Naive thymus-derived CD8-positive, alpha-beta T cell (primary cell): ENCODE measurements at regions of chr1 and their contacts with region 1.

Region 1: DNA sequence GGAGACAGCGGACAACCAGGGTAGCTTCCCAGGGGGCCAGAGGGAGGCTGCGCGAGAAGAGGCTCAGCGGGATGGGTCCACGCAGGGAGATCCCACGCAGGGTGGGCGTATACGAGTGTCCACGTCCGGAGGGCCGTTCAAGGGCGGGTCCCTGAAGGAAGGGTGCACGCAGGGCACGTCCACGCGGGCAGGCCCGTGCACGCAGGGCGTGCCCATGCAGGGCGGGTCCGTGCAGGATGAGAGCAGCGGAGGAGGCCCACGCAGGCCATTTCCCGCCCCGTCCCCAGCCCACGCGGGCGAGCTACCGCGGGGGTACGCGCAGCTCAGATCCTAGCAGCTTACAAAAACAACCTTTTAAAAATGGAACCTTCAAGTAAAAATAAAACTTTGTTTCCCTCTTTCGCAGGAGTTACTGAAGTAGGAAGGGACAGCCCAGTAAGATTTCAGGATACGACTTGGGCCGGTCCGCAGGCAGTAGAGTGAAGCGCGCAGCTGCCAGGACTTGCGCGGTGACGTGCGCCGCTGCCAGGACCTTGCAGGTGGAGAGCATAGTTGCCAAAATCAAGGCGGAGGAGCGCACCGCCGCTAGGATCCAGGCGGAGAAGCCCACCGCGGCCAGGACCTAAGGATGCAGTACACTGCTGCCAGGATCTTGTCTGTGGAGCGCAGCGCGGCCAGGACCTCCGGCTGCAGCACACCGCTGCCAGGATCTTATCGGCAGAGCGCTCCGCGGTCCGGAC is 416 bp upstream of the RNF187 start:
- DNase-seq: peak; percentile 68 to 96 (median 80)
- ATAC-seq: peak; percentile 76 to 81
- H3K4me3 Mint-ChIP-seq: peak overlapping the region; percentile 91 to 99 (median 96)
- H3K27ac Mint-ChIP-seq: peak overlapping the region; percentile 99 to 100 (median 100)
- H3K4me1 Mint-ChIP-seq: peaks cover 20 to 41% (median 33%) of the 10 kb centered on the region in 4 donors
- H3K27me3 Mint-ChIP-seq: no peaks in the 10 kb centered on the region

Region 2: GRCh38 chr1:228457396-228458176 is 29.2 kb before region 1 on chr1:
- POLR2A ChIA-PET with region 1: interaction called, 37 read pairs
- DNase-seq: peak; percentile 61 to 94 (median 86)
- ATAC-seq: peak; percentile 82 to 84
- H3K4me3 Mint-ChIP-seq: peak overlapping the region; percentile 83 to 99 (median 94)
- H3K27ac Mint-ChIP-seq: peak overlapping the region; percentile 89 to 100 (median 98)
- H3K4me1 Mint-ChIP-seq: peaks cover 13 to 51% (median 34%) of the 10 kb centered on the region in 4 donors
- H3K27me3 Mint-ChIP-seq: peaks cover 0 to 30% (median 8%) of the 10 kb centered on the region in 5 donors

Region 3: DNA sequence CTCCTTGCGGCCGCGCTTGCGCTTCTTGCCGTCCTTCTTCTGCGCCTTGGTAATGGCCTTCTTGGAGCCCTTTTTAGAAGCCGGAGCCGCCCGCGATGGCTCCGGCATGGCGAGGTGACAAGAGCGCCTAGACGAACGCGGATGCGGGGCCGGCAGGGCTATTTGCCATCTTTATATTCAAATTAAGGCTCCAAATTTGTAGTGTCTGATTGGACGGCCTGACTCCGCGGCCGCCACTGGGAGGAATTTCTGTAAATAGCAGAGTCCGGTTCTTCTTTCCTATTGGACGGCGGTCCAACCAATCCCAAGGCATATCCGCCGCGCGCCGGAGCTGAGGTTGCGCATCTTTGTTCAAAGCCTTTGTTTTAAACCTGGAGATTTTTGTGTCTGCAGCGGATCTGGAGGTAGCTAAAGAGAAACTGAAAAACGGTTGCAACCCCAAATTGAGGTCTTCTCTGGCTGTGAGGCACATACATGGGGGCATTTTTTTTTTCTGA is 22.2 kb before region 1 on chr1:
- POLR2A ChIA-PET with region 1: interaction called, 27 read pairs
- DNase-seq: peak; percentile 71 to 93 (median 85)
- ATAC-seq: peak; percentile 97 to 98
- H3K4me3 Mint-ChIP-seq: peak overlapping the region; percentile 76 to 95 (median 88)
- H3K27ac Mint-ChIP-seq: peak overlapping the region; percentile 2 to 89 (median 78)
- H3K4me1 Mint-ChIP-seq: peaks cover 20 to 48% (median 36%) of the 10 kb centered on the region in 4 donors
- H3K27me3 Mint-ChIP-seq: peaks cover 14 to 54% (median 34%) of the 10 kb centered on the region in 5 donors

Region 4: DNA sequence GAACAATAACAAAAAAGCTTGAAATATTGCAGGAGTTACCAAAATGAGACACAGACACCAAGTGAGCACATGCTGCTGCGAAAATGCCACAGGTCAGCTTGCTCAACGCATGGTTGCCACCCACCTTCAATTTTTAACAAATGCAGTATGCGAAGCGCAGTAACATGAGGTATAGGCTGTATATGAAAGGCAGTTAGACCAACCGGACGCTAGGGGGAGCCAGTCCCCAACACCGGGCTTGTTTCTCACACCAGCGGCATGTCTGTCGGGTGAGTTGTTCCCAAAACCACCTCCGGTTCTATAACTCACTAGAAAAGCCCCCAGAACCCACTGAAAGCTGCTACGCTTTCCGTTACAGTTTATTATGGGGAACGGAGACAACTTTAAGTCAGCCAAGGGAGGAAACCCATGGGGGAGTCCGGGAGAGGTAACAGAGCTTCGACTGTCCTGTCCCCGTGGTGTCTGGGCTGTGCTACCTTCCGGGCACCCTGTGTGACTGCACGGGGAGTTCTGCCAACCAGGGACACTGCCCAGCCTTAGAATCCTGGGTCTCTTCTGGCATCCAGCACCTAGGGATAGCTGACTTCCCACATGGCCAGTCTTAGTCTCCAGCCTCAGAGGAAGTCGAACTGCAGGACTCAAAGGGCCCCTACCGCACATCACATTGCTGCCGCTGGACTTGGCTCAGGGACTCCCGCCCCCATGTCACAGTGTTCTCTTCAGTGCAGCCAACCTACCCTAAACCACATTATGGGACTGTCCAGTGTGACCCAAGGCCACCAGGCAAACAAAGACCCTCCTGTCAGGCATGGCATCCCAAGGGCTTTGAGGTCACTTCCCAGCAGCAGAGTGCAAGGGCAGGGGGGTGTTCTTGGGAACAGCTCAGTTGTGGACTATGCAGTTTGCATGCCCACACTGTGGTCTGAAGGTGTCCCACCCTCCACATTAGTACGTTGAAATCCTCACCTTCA is 14.4 kb after region 1 on chr1:
- POLR2A ChIA-PET with region 1: interaction called, 11 read pairs
- DNase-seq: peak; percentile 77 to 93 (median 86)
- ATAC-seq: peak; percentile 99
- H3K4me3 Mint-ChIP-seq: peak overlapping the region; percentile 71 to 89 (median 82)
- H3K27ac Mint-ChIP-seq: peak overlapping the region in 9 of 10 donors; percentile 33 to 91 (median 86)
- H3K4me1 Mint-ChIP-seq: peaks cover 16 to 32% (median 29%) of the 10 kb centered on the region in 4 donors
- H3K27me3 Mint-ChIP-seq: peaks cover 0 to 7% (median 0%) of the 10 kb centered on the region in 5 donors